GM13976 (cell line): ENCODE measurements at regions of chr15 and their contacts with region 1.

Region 1: DNA sequence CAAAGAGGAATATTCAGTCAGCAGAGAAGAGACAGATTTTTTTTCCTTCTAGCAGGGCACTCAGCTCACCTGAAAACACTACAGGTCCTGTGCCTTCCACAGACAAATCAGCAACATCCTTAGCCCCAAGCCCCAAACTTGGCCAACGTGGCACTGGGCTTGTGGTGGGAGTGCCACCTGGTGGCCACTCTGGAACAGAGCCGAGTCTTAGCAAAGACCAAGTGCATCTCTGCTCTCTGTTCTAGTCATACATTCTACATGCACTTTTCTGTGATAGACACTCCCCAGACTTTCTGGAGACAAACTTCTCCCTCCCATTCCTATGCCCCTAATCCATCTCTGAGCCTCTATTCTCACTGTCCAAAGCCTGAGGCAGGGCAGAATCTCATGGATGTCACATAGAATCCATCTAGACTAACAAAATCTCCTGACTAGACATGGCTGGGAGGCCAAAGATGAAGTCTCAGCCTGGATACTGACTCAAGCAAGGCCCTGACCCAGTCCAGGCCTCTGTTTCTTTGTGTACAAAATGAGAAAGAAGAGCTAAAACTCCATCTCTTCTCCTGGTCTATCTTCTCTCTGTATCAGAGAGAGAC is 5.1 kb upstream of the SEMA7A start:
- DNase-seq: peak; percentile 86
- CTCF ChIP-seq: peak; percentile 92

Region 2: GRCh38 chr15:74283368-74283767 is 155.5 kb before region 1 on chr15:
- in situ Hi-C with region 1: no loop called
- DNase-seq: no peak
- CTCF ChIP-seq: no peak

Region 3: GRCh38 chr15:74382004-74382816 is 56.6 kb before region 1 on chr15:
- in situ Hi-C with region 1: loop called (anchors 5 kb)
- DNase-seq: peak; percentile 85
- CTCF ChIP-seq: peak; percentile 95

Region 4: DNA sequence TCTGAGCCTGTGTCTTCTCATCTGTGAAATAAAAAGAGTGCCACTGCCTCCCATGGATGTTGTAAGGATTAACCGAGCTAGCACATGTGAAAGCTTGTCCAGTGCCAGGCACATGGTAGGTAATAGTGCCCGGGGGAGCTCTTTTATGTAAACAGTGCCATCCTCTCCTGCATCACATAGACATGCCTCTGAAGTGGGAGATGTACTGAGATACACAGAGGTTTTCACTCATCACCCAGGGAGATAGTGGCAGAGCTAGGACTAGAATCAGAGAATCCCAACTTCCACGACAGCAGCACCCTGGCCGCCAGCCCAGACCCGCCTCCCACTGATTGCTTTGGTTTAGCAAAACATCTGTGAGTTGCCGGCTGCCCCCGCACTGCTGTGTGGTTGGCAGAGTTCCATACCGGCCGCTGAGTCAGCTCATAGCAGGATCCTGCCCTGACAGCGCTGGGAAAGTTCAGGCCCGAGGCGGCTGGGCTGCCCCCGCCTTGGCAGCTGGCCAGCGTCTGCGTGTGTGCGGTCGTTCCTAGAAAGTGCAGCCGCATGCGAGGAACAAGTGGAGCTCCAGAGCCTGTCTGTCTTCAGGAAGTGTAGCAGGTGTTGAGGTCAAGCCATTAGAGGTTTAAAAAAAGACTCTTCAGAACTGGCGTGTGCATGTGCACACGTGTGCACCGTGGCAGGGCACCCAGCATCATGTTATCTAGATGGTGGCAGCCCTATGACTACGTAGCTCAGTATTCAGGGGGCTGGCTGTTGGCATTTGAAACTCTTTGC is 107.2 kb after region 1 on chr15:
- in situ Hi-C with region 1: no loop called
- DNase-seq: peak; percentile 81
- CTCF ChIP-seq: no peak